ENCODE measurements at regions of chr16 and their contacts with region 1.

Region 1: DNA sequence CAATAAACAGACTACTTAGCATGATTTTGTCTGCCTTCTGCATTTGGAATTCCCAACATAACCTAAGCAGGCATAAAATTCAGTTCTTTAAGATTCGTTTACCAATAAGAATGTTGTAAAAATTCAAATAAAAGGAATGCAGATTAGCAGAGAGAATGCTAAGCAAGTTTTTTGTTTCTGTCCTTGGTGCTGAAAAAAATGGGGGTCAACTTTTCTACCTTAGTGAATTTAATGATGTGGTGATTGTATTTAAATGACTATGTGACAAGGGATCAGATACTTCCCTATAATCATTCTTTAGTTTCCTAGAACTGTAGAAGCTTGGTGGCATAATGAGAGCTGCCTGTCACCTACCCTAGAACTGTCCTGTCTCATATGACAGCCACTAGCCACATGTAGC is 159.5 kb downstream of the RBFOX1 start:
- DNase-seq: no peak
- H3K4me3 ChIP-seq: no peak overlapping the region
- H3K27ac ChIP-seq: no peak overlapping the region
- H3K4me1 ChIP-seq: no peaks in the 10 kb centered on the region
- H3K27me3 ChIP-seq: no peaks in the 10 kb centered on the region
- CTCF ChIP-seq: no peak
- POLR2A ChIP-seq: no peak

Region 2: DNA sequence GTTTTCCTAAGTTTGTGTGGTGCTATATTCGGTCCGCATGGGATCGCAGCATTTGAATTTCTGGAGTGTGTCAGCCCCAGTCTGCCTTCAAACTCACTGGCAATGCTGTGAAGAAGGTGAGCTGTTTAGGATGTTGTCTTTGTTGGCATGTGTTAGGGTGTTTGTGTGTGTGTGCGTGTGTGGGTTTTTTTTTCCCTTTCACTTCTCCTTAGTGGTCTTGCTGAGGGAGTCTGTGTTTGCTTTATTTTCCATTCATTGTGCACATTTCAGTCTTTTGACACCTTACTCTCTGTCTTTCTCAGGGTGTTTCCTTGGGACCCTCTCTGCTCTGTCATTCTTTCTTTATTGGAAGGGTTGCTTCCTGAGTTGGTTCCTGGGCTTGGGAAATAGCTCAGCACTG is 187.2 kb before region 1 on chr16:
- intact Hi-C with region 1: loop called (anchors 5 kb)
- DNase-seq: no peak
- H3K4me3 ChIP-seq: no peak overlapping the region
- H3K27ac ChIP-seq: no peak overlapping the region
- H3K4me1 ChIP-seq: peaks cover 0 to 19% (median 5%) of the 10 kb centered on the region in 3 donors
- H3K27me3 ChIP-seq: peaks cover 0 to 77% (median 7%) of the 10 kb centered on the region in 4 donors
- CTCF ChIP-seq: no peak
- POLR2A ChIP-seq: no peak

Measured in esophagus squamous epithelium (tissue), 5 donors.